Posterior cingulate gyrus (tissue), 11 donors: ENCODE measurements at regions of chr6 and their contacts with region 1.

Region 1: GRCh38 chr6:142146828-142147662 is at the starts of genes NMBR and VTA1:
- DNase-seq: peak; percentile 95 to 100 (median 98)

Region 2: DNA sequence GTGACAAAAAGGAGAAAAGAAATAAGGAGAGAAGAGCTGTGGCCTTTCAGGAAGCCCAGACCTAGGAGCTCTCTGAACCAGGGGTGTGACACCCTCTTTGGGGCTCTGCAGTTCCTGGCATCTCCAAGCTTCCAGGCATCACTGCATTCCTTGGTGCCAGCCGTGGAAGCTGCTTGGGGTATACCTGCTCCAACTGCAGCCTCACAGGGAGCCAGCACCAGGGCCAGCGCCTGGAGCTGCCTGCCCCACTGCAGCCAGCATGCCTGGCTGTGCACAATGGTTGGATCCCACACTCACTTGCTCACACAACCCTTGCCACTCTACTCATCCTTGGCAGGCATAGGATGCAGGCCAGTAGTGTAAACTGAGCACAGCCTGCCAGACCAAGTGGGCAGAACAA is 256.4 kb before region 1 on chr6:
- intact Hi-C with region 1: no loop called
- DNase-seq: peak in 2 of 10 donors; percentile 61 to 76

Region 3: GRCh38 chr6:142071981-142072380 is 75.1 kb before region 1 on chr6:
- intact Hi-C with region 1: no loop called
- DNase-seq: no peak

Region 4: GRCh38 chr6:142207265-142207877 is 60.3 kb after region 1 on chr6:
- intact Hi-C with region 1: loop called (anchors 5 kb)
- DNase-seq: peak in 4 of 10 donors; percentile 24 to 73 (median 48)

Region 5: DNA sequence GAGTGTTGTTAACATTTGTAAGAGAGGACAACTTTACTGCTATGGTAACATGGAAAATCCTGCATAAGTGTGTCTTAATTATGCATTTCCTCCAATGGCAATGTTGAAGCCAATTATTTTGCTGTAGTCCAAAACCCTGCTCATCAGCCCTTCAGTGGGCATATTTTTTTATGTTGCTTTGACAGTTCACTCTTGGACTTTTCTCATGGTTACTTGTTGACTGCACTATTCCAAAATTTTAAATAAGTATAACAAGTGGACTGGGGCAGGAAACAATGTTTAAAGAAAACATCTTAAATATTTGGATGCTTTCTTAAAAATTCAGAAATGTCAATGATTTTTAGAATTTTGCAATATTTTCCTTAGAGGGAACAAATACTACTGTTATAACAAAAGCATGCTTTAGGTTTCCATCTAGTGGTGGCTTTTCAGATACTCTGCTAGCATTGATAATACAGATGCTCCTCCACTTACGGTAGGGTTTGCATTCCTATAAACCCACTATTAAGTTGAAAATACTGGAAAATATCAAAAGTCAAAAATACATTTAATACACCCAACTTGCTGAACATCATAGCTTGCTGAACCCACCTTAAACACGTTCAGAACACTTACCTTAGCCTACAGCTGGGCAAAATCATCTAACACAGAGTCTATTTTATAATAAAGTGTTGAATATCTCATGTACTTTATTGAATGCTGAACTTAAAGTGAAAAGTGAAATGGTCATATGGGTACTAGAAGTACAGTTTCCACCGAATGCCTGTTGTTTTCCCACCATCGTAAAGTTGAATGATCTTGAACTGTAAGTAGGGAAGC is 241.2 kb after region 1 on chr6:
- intact Hi-C with region 1: loop called (anchors 2 kb)
- DNase-seq: no peak